WTC11 (cell line): ENCODE measurements at regions of chr20 and their contacts with region 1.

Region 1: GRCh38 chr20:31723319-31724078 is 831 bp upstream of the BCL2L1 start:
- DNase-seq: peak; percentile 99
- ATAC-seq: peak; percentile 86
- H3K4me3 Mint-ChIP-seq: peak overlapping the region; percentile 86
- H3K27ac Mint-ChIP-seq: peak overlapping the region; percentile 94
- H3K4me1 Mint-ChIP-seq: peaks cover 38% of the 10 kb centered on the region
- H3K27me3 Mint-ChIP-seq: no peaks in the 10 kb centered on the region
- CTCF ChIP-seq: no peak; the same call in none of the 2 replicates

Region 2: DNA sequence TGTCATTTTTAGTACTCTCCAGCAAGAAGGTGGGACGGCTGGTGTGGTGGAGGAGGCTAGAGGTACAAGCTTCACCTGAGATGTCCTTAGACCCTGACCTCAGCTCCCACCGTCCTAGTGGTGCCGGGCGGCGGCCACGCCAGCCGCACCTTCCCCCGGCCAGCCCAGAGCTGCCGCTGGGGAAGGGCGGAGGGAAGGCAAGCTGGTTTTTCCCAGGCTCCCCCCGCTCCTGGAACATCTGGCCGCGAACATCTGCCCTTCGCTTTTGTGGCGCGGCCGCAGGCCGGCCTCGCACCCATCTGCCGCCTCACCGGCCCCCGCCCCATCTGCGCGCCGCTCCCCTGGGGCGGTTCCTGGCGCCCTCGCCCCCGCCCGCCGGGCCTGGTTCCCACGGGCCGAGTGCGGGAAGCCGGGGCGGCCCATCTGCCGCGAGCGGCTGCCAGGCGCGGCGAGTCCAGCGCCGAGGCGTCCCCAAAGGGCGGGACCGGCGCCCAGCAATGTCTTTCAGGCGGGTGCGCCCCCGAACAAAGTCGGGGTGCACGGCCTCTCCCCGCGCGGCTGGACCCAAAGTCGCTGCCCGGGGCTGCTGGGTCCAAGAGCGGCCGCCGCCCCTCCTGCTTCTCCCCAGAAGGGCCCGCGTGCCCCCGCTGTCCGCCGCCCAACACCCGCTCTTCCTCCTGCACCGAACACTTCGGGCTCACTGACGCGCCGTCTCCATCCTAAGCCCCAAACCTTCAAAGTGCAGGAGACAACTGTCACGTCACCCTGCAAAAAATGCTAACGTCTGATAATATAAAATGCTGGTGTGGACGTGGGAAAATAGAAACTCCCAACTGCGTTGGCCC is 135.7 kb before region 1 on chr20:
- CTCF ChIA-PET with region 1: interaction called, 10 read pairs
- POLR2A ChIA-PET with region 1: no interaction called
- DNase-seq: no peak
- ATAC-seq: peak; percentile 27
- H3K4me3 Mint-ChIP-seq: peak overlapping the region; percentile 76
- H3K27ac Mint-ChIP-seq: peak overlapping the region; percentile 50
- H3K4me1 Mint-ChIP-seq: peaks cover 56% of the 10 kb centered on the region
- H3K27me3 Mint-ChIP-seq: peaks cover 14% of the 10 kb centered on the region
- CTCF ChIP-seq: no peak

Region 3: DNA sequence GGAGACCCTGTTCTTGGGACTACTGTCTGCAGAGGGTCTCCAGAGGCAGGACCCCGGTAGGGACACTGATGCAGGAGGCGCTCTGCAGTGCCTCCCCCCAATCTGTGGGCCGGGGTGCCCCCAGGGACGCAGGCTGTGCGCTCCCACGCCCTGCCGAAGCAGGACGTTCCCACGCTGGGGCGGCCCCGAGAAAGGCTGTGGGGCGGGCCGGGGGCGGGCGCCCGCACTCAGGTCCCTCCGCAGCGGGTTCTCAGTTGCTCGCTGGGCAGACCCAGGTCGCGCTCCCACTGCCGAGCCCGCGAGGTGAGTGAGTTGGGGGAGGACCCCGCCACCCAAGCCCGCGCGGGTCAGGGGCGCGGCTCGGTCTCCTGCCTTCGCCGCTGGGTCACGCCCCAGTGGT is 85.8 kb before region 1 on chr20 and contains the start of gene COX4I2:
- CTCF ChIA-PET with region 1: interaction called, 146 read pairs
- POLR2A ChIA-PET with region 1: interaction called, 5 read pairs
- DNase-seq: peak; percentile 19
- ATAC-seq: peak; percentile 35
- H3K4me3 Mint-ChIP-seq: no peak within 1 kb of the TSS
- H3K27ac Mint-ChIP-seq: no peak within 1 kb of the TSS
- H3K4me1 Mint-ChIP-seq: no peaks in the 10 kb centered on the region
- H3K27me3 Mint-ChIP-seq: no peaks in the 10 kb centered on the region; the same call in 1 of the 2 replicates
- CTCF ChIP-seq: no peak
- total RNA-seq, gene COX4I2: 0.44 TPM in 1 of 3 replicates, not detected in the others

Region 4: DNA sequence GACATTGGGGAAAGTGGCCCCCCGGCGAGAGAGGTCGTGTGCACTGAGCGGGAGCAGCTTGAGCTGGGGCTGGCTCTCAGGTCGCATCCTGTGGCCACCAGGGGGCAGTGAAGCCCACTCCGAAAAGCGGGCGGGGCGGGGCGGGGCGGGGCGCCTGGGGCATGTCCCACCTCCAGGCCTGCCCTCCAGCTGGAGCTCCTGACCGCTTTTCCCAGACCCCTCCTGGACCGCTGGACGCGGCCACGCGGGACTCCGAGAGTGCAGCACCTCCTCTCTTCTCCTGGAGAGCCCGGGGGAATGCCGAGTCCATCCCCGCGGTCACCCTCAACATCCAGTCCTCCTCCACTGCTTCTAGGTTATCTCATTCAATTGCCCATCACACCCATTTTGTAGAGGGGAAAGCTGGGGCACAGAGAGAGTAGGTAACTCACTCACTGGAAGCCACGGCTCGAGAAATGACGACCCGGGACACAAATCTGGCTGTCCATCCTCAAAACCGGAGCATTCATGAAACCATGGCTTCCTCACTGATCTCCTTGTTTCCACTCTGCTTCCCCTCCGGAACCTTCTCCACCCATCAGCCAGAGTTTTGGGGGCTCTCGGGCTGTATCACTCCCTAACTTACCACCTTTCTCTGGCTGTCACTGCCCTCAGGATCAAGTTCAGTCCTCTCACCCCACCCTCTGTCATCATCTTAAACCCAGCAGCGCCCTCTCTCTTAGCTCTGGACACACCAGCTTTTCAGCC is 61.7 kb before region 1 on chr20:
- CTCF ChIA-PET with region 1: interaction called, 488 read pairs
- POLR2A ChIA-PET with region 1: interaction called, 45 read pairs
- DNase-seq: peak; percentile 87
- ATAC-seq: peak; percentile 84
- H3K4me3 Mint-ChIP-seq: peak overlapping the region; percentile 74
- H3K27ac Mint-ChIP-seq: peak overlapping the region; percentile 79
- H3K4me1 Mint-ChIP-seq: peaks cover 23% of the 10 kb centered on the region
- H3K27me3 Mint-ChIP-seq: no peaks in the 10 kb centered on the region
- CTCF ChIP-seq: peak; percentile 88

Region 5: DNA sequence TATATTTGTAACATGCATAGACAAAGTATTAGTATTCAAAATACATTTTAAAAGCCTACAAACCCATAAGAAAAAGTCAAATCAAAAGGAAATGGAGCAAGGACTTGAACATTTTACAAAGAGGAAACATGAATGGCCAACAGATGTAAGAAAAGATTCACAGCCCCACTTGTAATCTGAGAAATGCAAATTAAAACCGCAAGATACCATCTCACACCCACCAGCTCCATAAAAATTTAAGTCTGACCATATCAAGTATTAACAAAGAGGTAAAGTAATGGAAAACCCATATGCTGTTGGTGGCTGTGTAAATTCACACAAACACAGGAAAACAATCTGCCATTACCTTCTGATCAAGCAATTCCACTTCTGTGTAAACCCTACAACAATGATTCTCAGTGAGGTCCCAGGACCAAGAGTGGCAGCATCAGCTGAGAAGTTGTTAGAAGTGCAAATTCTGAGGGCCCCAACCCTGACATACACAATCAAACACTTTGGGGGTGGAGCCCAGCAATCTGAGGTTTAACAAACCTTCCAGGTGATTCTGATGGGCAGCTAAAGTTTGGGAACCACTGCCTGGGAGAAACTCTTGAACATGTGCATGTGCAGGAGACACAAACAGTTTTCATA is 31.7 kb before region 1 on chr20:
- CTCF ChIA-PET with region 1: interaction called, 61 read pairs
- POLR2A ChIA-PET with region 1: interaction called, 4 read pairs
- DNase-seq: no peak
- ATAC-seq: no peak
- H3K4me3 Mint-ChIP-seq: no peak overlapping the region
- H3K27ac Mint-ChIP-seq: peak overlapping the region; percentile 75
- H3K4me1 Mint-ChIP-seq: peaks cover 45% of the 10 kb centered on the region
- H3K27me3 Mint-ChIP-seq: no peaks in the 10 kb centered on the region
- CTCF ChIP-seq: no peak

Region 6: GRCh38 chr20:31738729-31739561 is 15.4 kb after region 1 on chr20 and contains the start of gene TPX2:
- CTCF ChIA-PET with region 1: interaction called, 43 read pairs
- POLR2A ChIA-PET with region 1: interaction called, 5 read pairs
- DNase-seq: peak; percentile 94
- ATAC-seq: peak; percentile 99
- H3K4me3 Mint-ChIP-seq: no peak within 1 kb of the TSS
- H3K27ac Mint-ChIP-seq: no peak within 1 kb of the TSS
- H3K4me1 Mint-ChIP-seq: no peaks in the 10 kb centered on the region
- H3K27me3 Mint-ChIP-seq: peaks cover 4% of the 10 kb centered on the region
- CTCF ChIP-seq: no peak
- total RNA-seq, gene TPX2: 113 to 123 TPM (median 115 TPM) in 3 replicates

Region 7: DNA sequence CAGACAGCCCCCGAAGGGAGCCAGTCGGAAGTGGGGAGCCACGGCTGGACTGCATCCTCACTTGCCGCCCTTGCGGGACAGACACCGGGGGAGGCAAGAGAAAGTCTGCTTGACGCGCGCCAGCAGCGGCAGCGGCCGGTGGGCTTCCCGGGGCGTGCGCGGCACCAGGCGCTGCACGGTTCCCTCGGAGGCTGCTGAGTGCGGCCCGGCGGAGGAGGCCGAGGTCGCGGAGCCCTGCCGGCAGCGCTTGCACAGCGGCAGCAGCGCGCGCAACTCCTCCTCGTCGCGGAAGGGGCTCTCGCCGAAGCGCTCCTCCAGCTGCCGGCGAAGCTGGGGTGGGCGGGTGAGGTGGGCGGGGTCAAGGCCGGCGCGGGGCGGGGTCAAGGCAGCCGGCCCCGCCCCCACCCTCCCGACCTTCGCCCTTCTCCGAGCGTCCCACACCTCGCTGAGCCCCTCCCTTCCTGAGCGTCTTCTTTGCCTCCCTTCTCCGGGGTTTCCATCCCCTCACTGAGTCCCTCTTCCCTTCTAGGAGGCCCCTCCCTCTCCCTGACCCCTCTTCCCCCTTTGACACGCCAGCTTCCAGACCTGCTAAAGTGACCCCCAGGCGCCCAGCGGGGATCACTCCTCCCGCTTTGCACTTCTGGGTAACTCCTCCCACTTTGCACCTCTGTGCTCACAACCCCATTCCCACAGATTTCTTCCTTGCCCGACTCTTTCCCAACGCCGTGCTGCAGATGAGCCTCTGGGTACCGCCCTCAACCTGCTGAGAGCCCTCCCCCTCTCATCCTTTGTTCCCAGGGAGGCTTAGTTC is 138.1 kb after region 1 on chr20:
- CTCF ChIA-PET with region 1: no interaction called
- POLR2A ChIA-PET with region 1: no interaction called
- DNase-seq: peak; percentile 82
- ATAC-seq: peak; percentile 82
- H3K4me3 Mint-ChIP-seq: peak overlapping the region; percentile 91
- H3K27ac Mint-ChIP-seq: peak overlapping the region; percentile 93
- H3K4me1 Mint-ChIP-seq: peaks cover 15% of the 10 kb centered on the region
- H3K27me3 Mint-ChIP-seq: peaks cover 37% of the 10 kb centered on the region
- CTCF ChIP-seq: no peak